AG04449 (cell line): ENCODE measurements at regions of chr5 and their contacts with region 1.

Region 1: GRCh38 chr5:115831163-115831768 is 10.1 kb downstream of the ATG12 start:
- DNase-seq: no peak
- H3K4me3 ChIP-seq: no peak overlapping the region
- CTCF ChIP-seq: peak; percentile 63

Region 2: GRCh38 chr5:115841382-115842088 is 10.3 kb after region 1 on chr5 and contains the starts of genes AP3S1 and ATG12:
- CTCF ChIA-PET with region 1: interaction called, 21 read pairs
- POLR2A ChIA-PET with region 1: no interaction called
- DNase-seq: peak; percentile 46
- H3K4me3 ChIP-seq: peak within 1 kb of the TSS; percentile 81
- CTCF ChIP-seq: no peak

Region 3: DNA sequence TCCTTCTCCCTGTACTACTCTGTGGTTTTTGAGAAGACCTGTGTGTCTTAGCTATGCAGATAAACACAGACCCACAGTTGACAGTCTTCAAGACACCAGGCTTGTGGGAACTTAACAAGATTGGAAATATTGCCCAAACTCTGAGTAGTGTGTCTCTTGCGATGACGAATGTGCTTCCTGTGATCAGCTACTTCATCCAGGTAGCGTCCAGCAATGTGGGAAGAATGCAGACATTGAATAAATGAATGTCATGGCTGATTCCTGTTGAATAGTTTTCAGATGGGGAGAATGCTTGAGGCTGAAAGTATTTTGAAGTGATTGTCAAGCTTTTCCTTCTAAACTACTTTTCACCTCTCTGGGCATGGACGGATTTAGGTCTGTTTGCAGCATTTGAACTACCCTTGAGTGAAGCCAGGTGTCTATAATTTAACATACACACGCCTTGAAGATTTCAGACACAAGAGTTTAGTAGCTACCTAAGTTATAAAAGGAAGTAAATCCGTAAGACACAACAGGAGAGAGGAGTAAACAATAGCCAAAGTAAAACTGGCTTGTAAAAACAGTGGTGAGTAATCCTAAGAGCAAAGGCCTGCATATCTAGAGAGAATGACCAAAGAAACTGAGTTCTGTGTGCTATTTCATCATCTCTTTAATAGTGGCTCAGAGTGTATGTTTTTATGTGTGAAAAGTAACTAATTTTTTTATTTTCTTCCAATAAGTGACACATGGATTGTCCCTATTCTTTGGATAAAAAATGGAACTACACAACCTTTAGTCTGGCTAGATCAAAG is 171.0 kb after region 1 on chr5:
- CTCF ChIA-PET with region 1: no interaction called
- POLR2A ChIA-PET with region 1: no interaction called
- DNase-seq: no peak
- H3K4me3 ChIP-seq: no peak overlapping the region
- CTCF ChIP-seq: no peak